CD8-positive, alpha-beta memory T cell (primary cell): ENCODE measurements at regions of chr1 and their contacts with region 1.

Region 1: GRCh38 chr1:37486680-37487618 is 12.6 kb downstream of the ZC3H12A start:
- DNase-seq: peak; percentile 69 to 83 (median 74)
- H3K4me3 ChIP-seq: no peak overlapping the region
- H3K4me3 Mint-ChIP-seq: no peak overlapping the region
- H3K27ac ChIP-seq: no peak overlapping the region
- H3K27ac Mint-ChIP-seq: peak overlapping the region; percentile 59 to 95 (median 77)
- H3K4me1 ChIP-seq: peaks cover 8% of the 10 kb centered on the region
- H3K4me1 Mint-ChIP-seq: peaks cover 12 to 31% (median 15%) of the 10 kb centered on the region in 3 donors
- H3K27me3 ChIP-seq: no peaks in the 10 kb centered on the region
- H3K27me3 Mint-ChIP-seq: no peaks in the 10 kb centered on the region

Region 2: DNA sequence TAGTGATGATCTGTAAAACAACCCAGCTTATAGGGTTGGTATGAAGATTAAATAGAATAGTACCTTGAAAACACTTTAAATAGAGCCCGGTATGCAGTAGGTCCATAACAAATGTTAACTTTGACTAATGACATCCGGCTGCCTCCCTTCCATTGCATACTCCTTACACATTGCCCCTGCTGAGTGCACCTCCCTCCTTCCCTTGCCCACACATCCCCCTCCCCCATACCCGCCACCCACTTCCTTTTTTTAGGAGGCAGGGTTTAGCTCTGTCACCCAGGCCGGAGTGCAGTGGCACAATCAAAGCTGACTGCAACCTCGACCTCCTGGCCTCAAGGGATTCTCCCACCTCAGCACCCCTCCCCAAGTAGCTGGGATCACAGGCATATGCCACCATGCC is 37.0 kb before region 1 on chr1:
- CTCF ChIA-PET with region 1: interaction called, 246 read pairs
- POLR2A ChIA-PET with region 1: no interaction called
- DNase-seq: peak in 1 of 5 donors; percentile 14
- H3K4me3 ChIP-seq: no peak overlapping the region
- H3K4me3 Mint-ChIP-seq: peak overlapping the region in 1 of 7 donors; percentile 74
- H3K27ac ChIP-seq: no peak overlapping the region
- H3K27ac Mint-ChIP-seq: peak overlapping the region in 3 of 8 donors; percentile 29 to 43 (median 43)
- H3K4me1 ChIP-seq: peaks cover 14% of the 10 kb centered on the region
- H3K4me1 Mint-ChIP-seq: peaks cover 11 to 13% (median 13%) of the 10 kb centered on the region in 3 donors
- H3K27me3 ChIP-seq: no peaks in the 10 kb centered on the region
- H3K27me3 Mint-ChIP-seq: peaks cover 1 to 22% of the 10 kb centered on the region in 2 donors

Region 3: GRCh38 chr1:37465593-37466517 is 21.1 kb before region 1 on chr1:
- CTCF ChIA-PET with region 1: interaction called, 246 read pairs
- POLR2A ChIA-PET with region 1: no interaction called
- DNase-seq: no peak
- H3K4me3 ChIP-seq: no peak overlapping the region
- H3K4me3 Mint-ChIP-seq: no peak overlapping the region
- H3K27ac ChIP-seq: no peak overlapping the region
- H3K27ac Mint-ChIP-seq: peak overlapping the region in 2 of 8 donors; percentile 26 to 96
- H3K4me1 ChIP-seq: peaks cover 3% of the 10 kb centered on the region
- H3K4me1 Mint-ChIP-seq: peaks cover 9 to 15% (median 11%) of the 10 kb centered on the region in 3 donors
- H3K27me3 ChIP-seq: no peaks in the 10 kb centered on the region
- H3K27me3 Mint-ChIP-seq: no peaks in the 10 kb centered on the region

Region 4: GRCh38 chr1:37498872-37499617 is 12.1 kb after region 1 on chr1:
- CTCF ChIA-PET with region 1: interaction called, 37 read pairs
- POLR2A ChIA-PET with region 1: no interaction called
- DNase-seq: no peak
- H3K4me3 ChIP-seq: no peak overlapping the region
- H3K4me3 Mint-ChIP-seq: no peak overlapping the region
- H3K27ac ChIP-seq: no peak overlapping the region
- H3K27ac Mint-ChIP-seq: peak overlapping the region in 5 of 8 donors; percentile 14 to 70 (median 56)
- H3K4me1 ChIP-seq: no peaks in the 10 kb centered on the region
- H3K4me1 Mint-ChIP-seq: peaks cover 11 to 25% (median 22%) of the 10 kb centered on the region in 3 donors
- H3K27me3 ChIP-seq: no peaks in the 10 kb centered on the region
- H3K27me3 Mint-ChIP-seq: no peaks in the 10 kb centered on the region

Region 5: GRCh38 chr1:37514350-37515184 is 27.6 kb after region 1 on chr1 and contains the start of gene MEAF6:
- CTCF ChIA-PET with region 1: interaction called, 22 read pairs
- POLR2A ChIA-PET with region 1: interaction called, 6 read pairs
- DNase-seq: peak; percentile 81 to 88 (median 84)
- H3K4me3 ChIP-seq: peak within 1 kb of the TSS; percentile 81
- H3K4me3 Mint-ChIP-seq: peak within 1 kb of the TSS; percentile 96 to 100 (median 99)
- H3K27ac ChIP-seq: peak within 1 kb of the TSS; percentile 84
- H3K27ac Mint-ChIP-seq: peak within 1 kb of the TSS; percentile 97 to 100 (median 99)
- H3K4me1 ChIP-seq: peaks cover 27% of the 10 kb centered on the region
- H3K4me1 Mint-ChIP-seq: peaks cover 45 to 55% (median 49%) of the 10 kb centered on the region in 3 donors
- H3K27me3 ChIP-seq: no peaks in the 10 kb centered on the region
- H3K27me3 Mint-ChIP-seq: no peaks in the 10 kb centered on the region
- total RNA-seq, gene MEAF6: 102 to 113 TPM